ENCODE measurements at regions of chr2 and their contacts with region 1.

Region 1: DNA sequence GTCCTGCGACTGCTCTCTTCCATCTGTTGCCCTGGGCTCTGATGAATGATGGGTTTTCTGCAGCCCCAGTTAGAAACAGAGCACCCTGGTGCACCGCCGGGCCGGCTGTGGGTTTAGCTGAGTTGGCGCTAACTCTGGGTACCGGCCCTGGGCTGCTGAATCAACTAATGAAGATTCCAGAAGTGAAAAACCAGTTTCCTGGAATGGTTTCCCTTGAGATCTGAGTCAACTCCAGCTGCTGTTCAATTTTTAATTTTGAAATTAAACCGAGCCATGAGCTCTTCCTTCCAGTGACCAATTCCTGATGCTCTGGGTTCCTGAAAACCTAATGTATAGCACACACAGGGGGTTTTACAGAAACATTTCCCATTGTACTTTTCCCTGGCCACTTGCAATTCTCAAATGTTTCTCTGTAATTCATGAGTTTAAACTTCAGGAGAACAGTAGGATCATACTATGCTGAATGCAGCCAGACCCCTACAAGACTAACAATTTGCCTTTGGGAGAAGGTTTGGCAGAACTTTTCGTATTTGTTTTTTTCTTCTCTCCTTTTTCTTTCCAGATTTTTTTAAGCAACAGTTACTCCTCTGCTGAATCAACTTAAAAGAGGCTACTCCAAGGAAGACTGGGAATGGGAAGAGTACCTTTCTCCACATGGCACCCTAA is 5.5 kb downstream of the COL6A3 start:
- DNase-seq: no peak
- H3K4me3 ChIP-seq: peak overlapping the region; percentile 9 to 62 (median 58)
- H3K27ac ChIP-seq: peak overlapping the region; percentile 61 to 81
- H3K4me1 ChIP-seq: no peaks in the 10 kb centered on the region
- H3K27me3 ChIP-seq: no peaks in the 10 kb centered on the region
- CTCF ChIP-seq: no peak
- POLR2A ChIP-seq: no peak

Region 2: DNA sequence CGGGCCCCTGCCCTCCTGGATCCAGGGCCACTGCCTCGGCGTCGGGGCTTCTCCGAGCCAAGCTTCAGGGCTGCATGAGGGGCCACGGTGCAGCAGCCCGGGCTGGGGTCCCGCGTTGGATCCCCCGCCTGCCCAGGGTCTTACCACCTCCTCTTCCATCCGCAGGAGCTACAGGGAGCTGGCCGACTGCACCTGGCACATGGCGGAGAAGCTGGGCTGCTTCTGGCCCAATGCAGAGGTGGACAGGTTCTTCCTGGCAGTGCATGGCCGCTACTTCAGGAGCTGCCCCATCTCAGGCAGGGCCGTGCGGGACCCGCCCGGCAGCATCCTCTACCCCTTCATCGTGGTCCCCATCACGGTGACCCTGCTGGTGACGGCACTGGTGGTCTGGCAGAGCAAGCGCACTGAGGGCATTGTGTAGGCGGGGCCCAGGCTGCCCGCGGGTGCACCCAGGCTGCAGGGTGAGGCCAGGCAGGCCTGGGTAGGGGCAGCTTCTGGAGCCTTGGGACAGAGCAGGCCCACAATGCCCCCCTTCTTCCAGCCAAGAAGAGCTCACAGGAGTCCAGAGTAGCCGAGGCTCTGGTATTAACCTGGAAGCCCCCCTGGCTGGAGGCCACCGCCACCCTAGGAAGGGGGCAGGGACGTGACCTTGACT is 503.0 kb after region 1 on chr2:
- intact Hi-C with region 1: loop called (anchors 5 kb)
- DNase-seq: peak in 1 of 2 donors; percentile 24
- H3K4me3 ChIP-seq: no peak overlapping the region
- H3K27ac ChIP-seq: no peak overlapping the region
- H3K4me1 ChIP-seq: no peaks in the 10 kb centered on the region
- H3K27me3 ChIP-seq: no peaks in the 10 kb centered on the region
- CTCF ChIP-seq: no peak
- POLR2A ChIP-seq: no peak

Measured in breast epithelium (tissue), 4 donors.